ENCODE measurements at regions of chr20 and their contacts with region 1.

Region 1: DNA sequence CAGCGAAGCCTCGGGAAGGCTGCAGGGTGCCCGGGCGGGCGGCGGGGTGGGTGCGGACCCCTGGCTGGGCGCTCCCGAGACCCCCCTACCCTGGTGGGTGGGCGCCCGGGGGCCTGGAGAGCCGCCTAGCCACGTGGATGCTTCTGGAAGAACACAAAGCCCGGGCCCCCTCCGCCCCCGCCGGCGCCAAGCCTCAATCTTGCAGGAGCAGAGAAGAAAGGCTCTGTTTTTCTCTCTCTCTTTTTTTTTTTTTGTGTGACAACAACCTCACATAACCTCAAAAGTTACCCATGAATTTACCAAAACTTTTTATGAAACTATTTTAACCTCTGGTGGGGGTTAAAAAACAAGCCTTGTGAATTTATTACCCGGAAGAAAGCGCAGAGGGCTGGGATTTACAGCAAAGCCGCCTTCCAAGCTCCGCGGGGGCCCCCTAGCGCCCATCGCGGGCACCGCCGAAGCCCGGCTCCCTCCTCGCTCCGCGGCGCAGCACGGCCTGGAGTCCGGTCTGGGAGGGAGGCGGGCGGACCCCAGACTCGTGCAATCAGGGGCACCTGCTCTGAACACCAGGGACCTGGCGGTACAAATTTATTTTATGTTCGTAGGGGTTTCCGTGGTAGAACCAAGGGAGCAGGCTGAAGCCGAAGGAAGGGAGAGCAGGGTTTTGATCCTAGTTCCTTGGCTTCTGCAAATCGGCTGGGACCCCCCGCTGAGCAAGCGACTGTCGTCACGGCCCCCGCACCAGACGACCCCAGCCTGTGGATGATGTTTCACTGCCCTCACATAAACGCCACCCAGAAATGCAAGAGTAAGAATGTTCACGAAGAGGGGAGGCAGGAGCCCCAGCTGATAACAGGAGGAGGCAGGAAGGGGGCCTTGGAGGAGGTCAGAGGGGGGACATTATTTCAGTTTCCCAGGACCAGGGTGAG is 58.9 kb downstream of the ZNF831 start:
- DNase-seq: peak; percentile 64 to 89 (median 82)
- ATAC-seq: peak; percentile 94
- H3K4me3 ChIP-seq: peak overlapping the region; percentile 39 to 50
- H3K4me3 Mint-ChIP-seq: peak overlapping the region; percentile 78
- H3K27ac ChIP-seq: peak overlapping the region in 1 of 2 experiments; percentile 31
- H3K27ac Mint-ChIP-seq: peak overlapping the region; percentile 88
- H3K4me1 ChIP-seq: peaks cover 18% of the 10 kb centered on the region
- H3K4me1 Mint-ChIP-seq: peaks cover 34% of the 10 kb centered on the region
- H3K27me3 ChIP-seq: no peaks in the 10 kb centered on the region
- H3K27me3 Mint-ChIP-seq: no peaks in the 10 kb centered on the region
- CTCF ChIP-seq: peak; percentile 96

Region 2: GRCh38 chr20:58870239-58871014 is 352.1 kb before region 1 on chr20:
- CTCF ChIA-PET with region 1: interaction called, 11 read pairs
- POLR2A ChIA-PET with region 1: no interaction called
- intact Hi-C with region 1: loop called (anchors 1 kb)
- DNase-seq: peak in 7 of 9 experiments; percentile 27 to 75 (median 65)
- ATAC-seq: peak; percentile 81
- H3K4me3 ChIP-seq: no peak overlapping the region
- H3K4me3 Mint-ChIP-seq: no peak overlapping the region
- H3K27ac ChIP-seq: no peak overlapping the region
- H3K27ac Mint-ChIP-seq: no peak overlapping the region
- H3K4me1 ChIP-seq: no peaks in the 10 kb centered on the region
- H3K4me1 Mint-ChIP-seq: peaks cover 5% of the 10 kb centered on the region
- H3K27me3 ChIP-seq: no peaks in the 10 kb centered on the region
- H3K27me3 Mint-ChIP-seq: no peaks in the 10 kb centered on the region
- CTCF ChIP-seq: peak; percentile 73

Region 3: GRCh38 chr20:59042796-59043660 is 179.5 kb before region 1 on chr20:
- CTCF ChIA-PET with region 1: no interaction called
- POLR2A ChIA-PET with region 1: interaction called, 3 read pairs
- intact Hi-C with region 1: loop called in 1 of 2 experiments (anchors 1 kb)
- DNase-seq: peak; percentile 88 to 97 (median 94)
- ATAC-seq: peak; percentile 92
- H3K4me3 ChIP-seq: peak overlapping the region; percentile 67 to 94
- H3K4me3 Mint-ChIP-seq: peak overlapping the region; percentile 90
- H3K27ac ChIP-seq: peak overlapping the region; percentile 74 to 92
- H3K27ac Mint-ChIP-seq: peak overlapping the region; percentile 93
- H3K4me1 ChIP-seq: peaks cover 48% of the 10 kb centered on the region
- H3K4me1 Mint-ChIP-seq: peaks cover 52% of the 10 kb centered on the region
- H3K27me3 ChIP-seq: no peaks in the 10 kb centered on the region
- H3K27me3 Mint-ChIP-seq: no peaks in the 10 kb centered on the region
- CTCF ChIP-seq: no peak

Region 4: DNA sequence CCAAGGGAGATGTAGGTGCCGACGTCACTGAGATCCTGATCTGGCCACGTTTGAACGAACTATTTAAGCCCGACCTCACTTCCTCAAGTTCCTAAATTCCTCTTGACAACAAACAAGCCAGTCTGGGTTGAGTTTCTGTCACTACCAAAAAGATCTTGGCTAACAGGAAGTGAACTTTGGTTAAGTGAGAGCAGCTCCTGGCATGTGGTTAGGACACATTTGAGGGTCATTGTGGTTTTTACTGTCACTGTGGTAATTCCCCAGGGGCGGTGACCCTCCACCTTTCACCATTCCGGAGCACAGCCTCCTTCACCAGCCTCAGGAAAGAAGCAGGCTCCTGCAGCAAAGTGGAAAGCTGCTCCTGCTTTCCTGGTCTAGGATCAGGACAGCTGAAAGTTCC is 102.0 kb before region 1 on chr20:
- CTCF ChIA-PET with region 1: interaction called, 17 read pairs
- POLR2A ChIA-PET with region 1: no interaction called
- intact Hi-C with region 1: no loop called
- DNase-seq: peak in 6 of 9 experiments; percentile 16 to 82 (median 42)
- ATAC-seq: no peak
- H3K4me3 ChIP-seq: no peak overlapping the region
- H3K4me3 Mint-ChIP-seq: peak overlapping the region; percentile 61
- H3K27ac ChIP-seq: peak overlapping the region; percentile 77 to 87
- H3K27ac Mint-ChIP-seq: peak overlapping the region; percentile 98
- H3K4me1 ChIP-seq: peaks cover 84% of the 10 kb centered on the region
- H3K4me1 Mint-ChIP-seq: peaks cover 89% of the 10 kb centered on the region
- H3K27me3 ChIP-seq: no peaks in the 10 kb centered on the region
- H3K27me3 Mint-ChIP-seq: no peaks in the 10 kb centered on the region
- CTCF ChIP-seq: no peak

Region 5: GRCh38 chr20:59207742-59208357 is 14.7 kb before region 1 on chr20:
- CTCF ChIA-PET with region 1: interaction called, 44 read pairs
- POLR2A ChIA-PET with region 1: interaction called, 5 read pairs
- intact Hi-C with region 1: no loop called
- DNase-seq: peak; percentile 66 to 90 (median 86)
- ATAC-seq: peak; percentile 96
- H3K4me3 ChIP-seq: no peak overlapping the region
- H3K4me3 Mint-ChIP-seq: no peak overlapping the region
- H3K27ac ChIP-seq: no peak overlapping the region
- H3K27ac Mint-ChIP-seq: peak overlapping the region; percentile 76
- H3K4me1 ChIP-seq: peaks cover 25% of the 10 kb centered on the region
- H3K4me1 Mint-ChIP-seq: peaks cover 37% of the 10 kb centered on the region
- H3K27me3 ChIP-seq: no peaks in the 10 kb centered on the region
- H3K27me3 Mint-ChIP-seq: no peaks in the 10 kb centered on the region
- CTCF ChIP-seq: peak; percentile 93

Region 6: DNA sequence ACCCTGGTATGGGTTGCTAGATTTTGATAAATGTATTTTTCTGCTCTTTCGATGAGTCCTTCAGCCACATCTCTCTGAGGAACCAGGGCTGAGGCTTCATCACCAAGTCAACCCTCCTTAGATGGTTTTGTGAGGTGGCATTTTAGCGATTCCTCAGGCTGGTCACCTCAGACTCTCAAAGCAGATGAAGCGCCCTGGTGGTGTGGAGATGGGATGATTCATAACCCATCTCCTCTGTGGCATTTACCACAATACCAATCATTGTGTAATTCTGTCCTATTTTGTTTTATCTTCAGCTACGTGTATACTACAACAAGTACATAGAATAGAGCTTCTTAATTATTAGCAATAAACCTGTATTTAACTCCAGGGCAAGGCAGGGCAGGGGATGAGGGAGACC is 20.2 kb after region 1 on chr20:
- CTCF ChIA-PET with region 1: no interaction called
- POLR2A ChIA-PET with region 1: no interaction called
- intact Hi-C with region 1: no loop called
- DNase-seq: peak in 3 of 9 experiments; percentile 23 to 32 (median 23)
- ATAC-seq: peak; percentile 73
- H3K4me3 ChIP-seq: no peak overlapping the region
- H3K4me3 Mint-ChIP-seq: no peak overlapping the region
- H3K27ac ChIP-seq: no peak overlapping the region
- H3K27ac Mint-ChIP-seq: no peak overlapping the region
- H3K4me1 ChIP-seq: no peaks in the 10 kb centered on the region
- H3K4me1 Mint-ChIP-seq: peaks cover 13% of the 10 kb centered on the region
- H3K27me3 ChIP-seq: no peaks in the 10 kb centered on the region
- H3K27me3 Mint-ChIP-seq: no peaks in the 10 kb centered on the region
- CTCF ChIP-seq: no peak